ENCODE measurements at regions of chr13 and their contacts with region 1.

Region 1: DNA sequence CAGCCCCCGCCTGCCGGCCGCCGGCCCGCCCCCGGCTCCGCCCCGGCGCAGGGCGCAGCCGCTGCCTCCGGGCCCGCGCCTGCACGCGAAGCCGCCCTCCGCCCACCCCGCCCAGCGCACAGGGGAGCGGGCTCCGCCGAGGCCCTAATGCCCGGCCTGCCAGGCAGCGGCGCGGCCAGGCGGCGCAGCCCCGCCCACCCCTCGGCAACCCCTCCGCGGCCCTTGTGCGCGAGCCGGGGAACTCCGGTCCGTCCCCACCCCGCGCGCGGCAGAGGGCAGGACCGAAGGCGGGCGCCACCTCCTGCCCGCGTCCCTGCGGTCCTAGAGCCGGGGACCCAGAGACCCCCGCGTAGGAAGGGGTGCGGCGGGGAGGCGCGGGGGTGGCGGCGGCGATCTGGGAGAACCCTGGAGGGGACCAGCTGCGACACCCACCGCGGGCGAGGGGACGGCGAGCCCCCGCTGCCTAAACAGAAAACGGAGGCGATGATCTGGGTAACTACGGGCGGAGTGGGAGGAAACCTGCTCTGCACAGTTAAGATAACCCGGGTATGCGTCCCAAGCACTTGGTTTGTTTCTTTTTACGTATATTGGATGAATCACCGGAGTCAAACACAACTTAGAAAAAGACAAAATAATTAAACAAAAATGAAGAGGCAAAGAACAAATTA is 350 bp upstream of the USP12 start:
- DNase-seq: peak; percentile 79
- H3K4me3 Mint-ChIP-seq: peak overlapping the region; percentile 81
- H3K27ac Mint-ChIP-seq: peak overlapping the region; percentile 81
- H3K4me1 Mint-ChIP-seq: peaks cover 61% of the 10 kb centered on the region
- H3K27me3 Mint-ChIP-seq: no peaks in the 10 kb centered on the region

Region 2: DNA sequence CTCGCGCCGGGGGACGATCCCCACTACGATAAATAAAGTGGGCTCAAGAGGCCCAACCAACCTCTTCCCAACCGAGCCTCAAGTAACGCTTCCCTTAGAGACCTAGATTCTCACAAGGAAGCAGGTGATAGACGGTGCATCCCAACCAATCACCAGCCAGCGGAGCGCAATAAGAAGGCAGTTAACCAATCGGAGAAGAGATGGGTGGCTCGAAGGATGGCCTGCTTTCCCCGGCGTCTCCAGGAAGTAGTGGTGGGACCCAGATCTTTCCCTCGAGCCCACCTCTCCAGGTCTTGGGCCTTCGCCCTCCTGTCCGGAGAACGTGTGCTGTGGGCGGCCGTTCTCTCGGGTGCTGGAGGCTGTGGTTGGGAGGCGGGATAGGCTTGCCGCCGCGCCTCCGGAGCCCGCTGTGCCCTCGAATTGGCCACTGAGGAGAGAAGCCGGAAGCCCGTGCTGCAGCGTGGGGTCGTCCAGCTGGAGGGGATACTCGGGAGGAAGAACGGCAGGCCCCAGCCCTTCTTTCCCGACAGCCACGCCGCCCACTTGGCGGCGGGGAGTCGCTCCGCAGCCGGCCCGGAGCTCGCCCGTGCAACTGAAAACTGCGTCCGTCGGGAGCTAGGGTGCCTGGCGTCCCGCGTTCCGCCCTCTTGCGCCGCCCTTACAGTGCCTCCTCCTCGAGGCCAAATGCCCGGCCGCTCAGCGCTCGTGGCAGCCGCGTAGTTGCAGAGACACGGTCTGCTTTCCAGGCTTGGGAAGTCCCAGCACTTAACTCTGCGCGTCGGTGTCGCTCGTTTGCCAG is 950.0 kb before region 1 on chr13 and contains the start of gene RNF6:
- CTCF ChIA-PET with region 1: no interaction called
- intact Hi-C with region 1: loop called (anchors 10 kb)
- DNase-seq: peak; percentile 92
- H3K4me3 Mint-ChIP-seq: peak within 1 kb of the TSS; percentile 91
- H3K27ac Mint-ChIP-seq: peak within 1 kb of the TSS; percentile 100
- H3K4me1 Mint-ChIP-seq: peaks cover 30% of the 10 kb centered on the region
- H3K27me3 Mint-ChIP-seq: peaks cover 2% of the 10 kb centered on the region
- total RNA-seq, gene RNF6: 38.2 to 39.4 TPM

Region 3: GRCh38 chr13:26742691-26743358 is 429.1 kb before region 1 on chr13:
- CTCF ChIA-PET with region 1: no interaction called
- intact Hi-C with region 1: no loop called
- DNase-seq: no peak
- H3K4me3 Mint-ChIP-seq: no peak overlapping the region
- H3K27ac Mint-ChIP-seq: no peak overlapping the region
- H3K4me1 Mint-ChIP-seq: no peaks in the 10 kb centered on the region
- H3K27me3 Mint-ChIP-seq: peaks cover 21% of the 10 kb centered on the region

Region 4: DNA sequence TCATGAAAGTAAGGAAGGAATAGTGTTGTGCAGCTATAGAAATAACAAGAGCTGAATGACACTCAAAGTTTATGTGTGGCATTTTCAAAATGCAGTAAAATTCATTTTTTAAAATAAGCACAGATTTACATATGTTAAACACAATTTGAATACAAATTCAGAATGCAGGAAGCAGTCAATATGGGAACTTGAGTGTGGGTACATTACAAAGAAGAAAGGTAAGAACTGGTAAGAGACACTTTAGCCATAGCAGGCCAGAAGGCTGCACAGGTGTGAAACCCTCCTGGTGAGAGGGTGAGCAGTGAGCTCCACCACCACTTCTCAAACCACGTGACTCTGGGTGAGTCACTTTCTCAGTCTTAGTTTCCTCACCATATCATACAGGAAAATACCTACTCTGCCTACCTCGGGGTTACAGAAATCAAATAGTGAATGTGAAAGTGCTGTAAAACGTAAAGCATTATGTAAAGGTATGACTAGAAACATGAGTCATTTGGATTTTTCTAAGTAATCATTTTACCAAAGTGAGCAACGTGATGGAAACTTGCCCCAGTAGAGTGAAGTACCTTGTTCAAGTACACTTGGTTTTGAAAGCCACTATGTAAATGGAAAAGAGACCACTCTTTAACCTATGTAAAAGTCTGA is 40.9 kb before region 1 on chr13:
- CTCF ChIA-PET with region 1: interaction called, 3 read pairs
- intact Hi-C with region 1: loop called (anchors 1 kb)
- DNase-seq: peak; percentile 89
- H3K4me3 Mint-ChIP-seq: no peak overlapping the region
- H3K27ac Mint-ChIP-seq: peak overlapping the region; percentile 91
- H3K4me1 Mint-ChIP-seq: peaks cover 88% of the 10 kb centered on the region
- H3K27me3 Mint-ChIP-seq: no peaks in the 10 kb centered on the region

Region 5: GRCh38 chr13:27270594-27271520 is 98.9 kb after region 1 on chr13 and contains the start of gene RASL11A:
- CTCF ChIA-PET with region 1: interaction called, 3 read pairs
- intact Hi-C with region 1: loop called (anchors 5 kb)
- DNase-seq: peak; percentile 65
- H3K4me3 Mint-ChIP-seq: peak within 1 kb of the TSS; percentile 83
- H3K27ac Mint-ChIP-seq: no peak within 1 kb of the TSS
- H3K4me1 Mint-ChIP-seq: peaks cover 8% of the 10 kb centered on the region
- H3K27me3 Mint-ChIP-seq: peaks cover 3% of the 10 kb centered on the region
- total RNA-seq, gene RASL11A: 1.5 to 1.6 TPM

Region 6: DNA sequence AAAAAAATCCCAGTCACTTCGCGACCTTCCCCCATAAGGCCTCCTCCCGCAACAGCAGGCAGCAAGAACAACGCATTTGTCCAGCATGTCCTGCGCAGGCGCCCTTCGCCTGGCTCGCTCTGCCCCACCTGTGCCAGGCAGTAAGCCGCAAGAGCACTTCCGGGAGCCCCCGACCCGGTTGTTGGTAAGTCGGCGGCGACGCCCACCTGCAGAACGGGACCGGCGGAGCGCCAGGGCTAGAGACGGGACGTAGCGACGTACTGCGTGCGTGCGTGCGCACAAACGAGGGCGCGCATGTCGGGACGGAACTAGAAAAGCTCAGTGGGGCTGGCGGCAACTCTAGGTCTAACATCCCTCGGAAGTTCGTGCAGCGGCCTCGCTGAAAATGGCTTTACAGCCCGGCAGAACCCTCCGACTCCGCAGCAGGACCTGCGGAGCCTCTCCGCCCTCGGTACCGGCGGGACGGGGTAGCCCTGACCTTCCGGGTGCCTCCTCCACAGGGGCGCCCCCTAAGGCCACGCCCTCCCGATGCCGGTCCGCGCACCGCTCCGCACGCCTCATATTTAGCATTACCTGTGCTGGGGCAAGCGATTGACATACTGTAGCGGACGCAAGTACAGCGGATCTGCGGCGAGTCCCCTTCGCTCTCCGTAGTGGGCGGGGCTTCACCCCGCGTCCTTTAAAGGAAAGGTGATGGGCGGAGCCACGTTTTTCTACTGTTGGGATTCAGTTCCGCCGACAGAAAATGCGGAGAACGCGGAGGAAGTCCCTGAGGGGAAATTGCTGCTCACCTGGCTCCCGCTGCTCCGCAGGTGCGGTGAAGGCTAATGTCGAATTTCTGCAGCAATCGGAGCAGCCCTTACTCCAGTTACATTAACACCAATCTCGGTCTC is 278.2 kb after region 1 on chr13 and contains the start of gene MTIF3:
- CTCF ChIA-PET with region 1: no interaction called
- intact Hi-C with region 1: loop called (anchors 5 kb)
- DNase-seq: peak; percentile 97
- H3K4me3 Mint-ChIP-seq: peak within 1 kb of the TSS; percentile 94
- H3K27ac Mint-ChIP-seq: peak within 1 kb of the TSS; percentile 99
- H3K4me1 Mint-ChIP-seq: peaks cover 55% of the 10 kb centered on the region
- H3K27me3 Mint-ChIP-seq: no peaks in the 10 kb centered on the region
- total RNA-seq, gene MTIF3: 34.0 to 42.1 TPM

Region 7: GRCh38 chr13:27541386-27541785 is 369.4 kb after region 1 on chr13:
- CTCF ChIA-PET with region 1: no interaction called
- intact Hi-C with region 1: no loop called
- DNase-seq: no peak
- H3K4me3 Mint-ChIP-seq: no peak overlapping the region
- H3K27ac Mint-ChIP-seq: no peak overlapping the region
- H3K4me1 Mint-ChIP-seq: no peaks in the 10 kb centered on the region
- H3K27me3 Mint-ChIP-seq: no peaks in the 10 kb centered on the region

Region 8: DNA sequence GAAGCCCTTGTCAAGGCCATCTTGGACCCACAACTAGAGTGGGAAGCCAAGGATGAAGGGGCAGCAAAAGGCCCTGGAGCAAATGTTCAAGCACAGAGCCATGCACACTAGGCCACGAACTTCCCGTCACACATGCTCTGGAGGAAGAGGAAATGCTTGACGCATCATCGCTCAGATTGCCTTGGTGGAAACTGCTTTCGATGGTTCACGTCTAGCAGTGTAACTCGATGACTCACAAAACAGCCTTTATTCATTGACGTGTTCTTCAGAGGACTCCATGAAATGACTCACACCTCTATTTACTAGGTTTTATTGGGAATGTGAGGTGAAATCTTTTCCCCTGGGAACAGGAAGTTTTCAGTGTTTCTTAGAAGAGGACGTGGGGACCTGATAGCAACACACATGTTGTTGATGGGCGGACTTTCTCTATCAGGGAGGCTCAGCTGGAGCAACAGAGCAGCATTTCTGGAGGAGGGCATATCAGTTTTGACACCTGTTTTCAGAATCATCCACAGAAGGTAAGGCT is 1402.7 kb after region 1 on chr13:
- CTCF ChIA-PET with region 1: no interaction called
- intact Hi-C with region 1: no loop called
- DNase-seq: peak; percentile 65
- H3K4me3 Mint-ChIP-seq: no peak overlapping the region
- H3K27ac Mint-ChIP-seq: peak overlapping the region; percentile 77
- H3K4me1 Mint-ChIP-seq: peaks cover 11% of the 10 kb centered on the region
- H3K27me3 Mint-ChIP-seq: no peaks in the 10 kb centered on the region